ENCODE measurements at regions of chr22 and their contacts with region 1.

Region 1: DNA sequence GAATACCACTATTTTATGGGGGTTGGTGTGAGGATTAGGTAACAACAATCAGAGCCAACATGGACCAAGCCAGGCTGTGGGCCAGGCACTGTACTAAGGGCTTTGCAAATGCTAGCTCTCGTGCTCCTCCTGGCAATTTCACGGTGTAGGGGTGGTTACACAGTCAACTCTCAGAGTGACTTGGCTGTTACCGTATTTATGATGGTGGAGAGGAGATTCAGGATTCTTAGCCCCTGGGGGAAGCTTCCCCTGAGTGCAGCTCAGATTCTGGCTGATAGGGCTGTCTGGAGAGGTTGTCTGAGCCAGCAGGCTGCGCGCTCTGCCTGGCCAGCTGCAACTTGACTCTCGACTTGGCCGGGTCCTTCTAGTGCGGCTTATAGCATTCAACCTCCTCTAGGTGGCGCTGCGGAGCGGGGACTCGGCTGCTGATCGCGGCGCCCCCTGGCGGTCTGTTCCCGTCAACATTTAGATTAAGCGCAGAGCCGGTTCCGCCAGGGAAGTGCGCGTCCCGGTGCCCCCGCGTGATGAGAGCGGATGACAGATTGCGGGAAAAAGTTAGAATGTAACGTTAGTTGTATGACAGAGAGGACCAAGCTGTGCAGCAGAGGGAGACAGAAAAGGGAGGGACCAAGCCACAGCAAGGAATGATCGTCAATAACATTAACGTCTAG is 4.5 kb upstream of the NCF4 start:
- DNase-seq: peak; percentile 96
- H3K4me3 Mint-ChIP-seq: no peak overlapping the region
- H3K27ac Mint-ChIP-seq: no peak overlapping the region
- H3K4me1 Mint-ChIP-seq: peaks cover 16% of the 10 kb centered on the region
- H3K27me3 Mint-ChIP-seq: peaks cover 2% of the 10 kb centered on the region

Region 2: DNA sequence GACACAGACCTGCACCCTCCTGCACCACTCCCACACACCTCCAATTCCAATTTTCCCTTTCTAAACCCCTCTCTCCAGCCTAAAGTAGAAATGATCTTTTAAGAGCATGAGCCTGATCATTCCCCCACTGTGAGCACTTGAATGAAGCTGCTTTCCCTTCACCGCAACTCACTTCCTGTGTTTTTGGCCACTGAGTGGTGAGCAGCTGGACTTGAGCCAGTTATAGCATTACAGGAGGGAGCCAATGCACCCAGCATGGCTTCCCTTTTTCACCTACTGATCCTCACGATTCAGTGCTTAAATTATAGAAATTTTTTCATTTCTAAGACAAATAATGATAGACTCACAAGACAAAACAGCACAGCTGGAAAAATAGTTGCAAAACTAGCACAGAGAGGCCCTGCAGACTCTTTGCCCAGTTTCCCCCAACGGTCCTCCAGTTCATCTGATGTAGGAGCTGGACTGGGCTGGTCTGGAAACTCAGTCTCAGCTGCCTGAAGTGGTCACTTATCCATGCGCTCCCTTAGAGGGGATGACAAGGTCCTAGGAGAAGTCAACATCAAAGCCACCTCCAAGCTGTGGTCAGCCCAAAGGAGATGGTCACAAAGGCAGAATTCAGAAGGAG is 644.9 kb before region 1 on chr22:
- CTCF ChIA-PET with region 1: no interaction called
- intact Hi-C with region 1: no loop called
- DNase-seq: no peak
- H3K4me3 Mint-ChIP-seq: no peak overlapping the region
- H3K27ac Mint-ChIP-seq: no peak overlapping the region
- H3K4me1 Mint-ChIP-seq: peaks cover 4% of the 10 kb centered on the region
- H3K27me3 Mint-ChIP-seq: peaks cover 13% of the 10 kb centered on the region

Region 3: GRCh38 chr22:36546092-36546804 is 310.0 kb before region 1 on chr22:
- CTCF ChIA-PET with region 1: interaction called, 11 read pairs
- intact Hi-C with region 1: loop called (anchors 1 kb)
- DNase-seq: peak; percentile 59
- H3K4me3 Mint-ChIP-seq: no peak overlapping the region
- H3K27ac Mint-ChIP-seq: no peak overlapping the region
- H3K4me1 Mint-ChIP-seq: peaks cover 12% of the 10 kb centered on the region
- H3K27me3 Mint-ChIP-seq: peaks cover 15% of the 10 kb centered on the region

Region 4: GRCh38 chr22:36775964-36776669 is 80.1 kb before region 1 on chr22 and contains the start of gene IFT27:
- CTCF ChIA-PET with region 1: interaction called, 43 read pairs
- intact Hi-C with region 1: no loop called
- DNase-seq: peak; percentile 99
- H3K4me3 Mint-ChIP-seq: peak within 1 kb of the TSS; percentile 91
- H3K27ac Mint-ChIP-seq: peak within 1 kb of the TSS; percentile 90
- H3K4me1 Mint-ChIP-seq: peaks cover 27% of the 10 kb centered on the region
- H3K27me3 Mint-ChIP-seq: no peaks in the 10 kb centered on the region
- total RNA-seq, gene IFT27: 15.7 to 16.2 TPM

Region 5: DNA sequence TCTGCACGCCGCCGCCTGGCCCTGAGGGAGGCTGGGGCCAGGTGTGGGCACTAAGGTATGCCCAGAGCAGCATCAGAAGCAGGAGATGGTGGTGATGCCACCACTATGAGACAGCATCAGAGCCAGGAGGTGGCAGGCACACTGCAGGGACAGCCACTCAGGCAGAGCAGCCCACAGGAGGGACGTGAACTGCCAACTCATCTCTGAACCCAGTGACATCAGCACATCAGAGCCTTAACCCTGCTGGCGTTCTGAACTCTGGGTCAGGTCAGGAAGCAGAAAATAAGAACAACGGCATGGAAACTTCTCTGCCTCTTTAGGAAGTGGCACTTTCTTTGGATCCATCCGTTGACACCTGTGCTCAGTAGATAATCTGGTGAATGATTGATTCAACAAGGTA is 65.6 kb before region 1 on chr22:
- CTCF ChIA-PET with region 1: interaction called, 13 read pairs
- intact Hi-C with region 1: loop called (anchors 1 kb)
- DNase-seq: peak; percentile 76
- H3K4me3 Mint-ChIP-seq: no peak overlapping the region
- H3K27ac Mint-ChIP-seq: no peak overlapping the region
- H3K4me1 Mint-ChIP-seq: peaks cover 7% of the 10 kb centered on the region
- H3K27me3 Mint-ChIP-seq: no peaks in the 10 kb centered on the region

Region 6: DNA sequence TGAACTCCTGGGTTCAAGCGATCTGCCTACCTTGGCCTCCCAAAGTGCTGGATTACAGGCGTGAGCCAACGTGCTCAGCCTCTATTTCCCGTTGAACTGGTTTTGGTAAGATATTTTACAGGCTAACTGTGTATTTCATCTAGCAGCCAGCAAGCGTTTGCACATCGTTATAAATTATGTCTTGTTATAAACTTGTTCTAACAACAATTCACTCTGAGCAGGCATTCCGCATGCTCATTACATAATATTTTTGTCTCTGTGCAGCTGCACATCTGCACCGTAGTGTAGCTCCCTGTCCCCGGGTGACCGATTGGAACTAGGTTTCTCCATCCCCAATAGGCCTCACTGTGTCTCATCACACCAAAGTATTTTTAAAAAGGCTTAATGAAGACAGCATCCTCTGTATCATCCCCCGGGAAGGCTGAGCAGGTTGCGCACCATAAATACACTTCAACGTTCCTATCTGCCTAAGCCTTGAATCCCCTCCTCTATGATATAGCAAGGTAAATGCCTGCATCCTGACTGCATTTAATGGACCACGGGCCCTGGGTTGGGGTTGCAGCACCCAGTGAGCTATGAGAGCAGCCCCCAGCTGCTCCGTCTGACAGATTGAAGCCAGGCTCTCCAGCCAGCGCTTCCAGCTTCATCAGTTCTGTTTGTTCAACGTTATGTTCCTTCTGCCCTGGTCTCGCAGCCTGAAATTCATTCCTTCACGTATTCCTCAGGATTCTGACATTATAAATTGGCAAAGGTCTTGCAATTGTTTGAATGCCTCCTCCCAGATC is 115.3 kb after region 1 on chr22:
- CTCF ChIA-PET with region 1: interaction called, 21 read pairs
- intact Hi-C with region 1: no loop called
- DNase-seq: no peak
- H3K4me3 Mint-ChIP-seq: no peak overlapping the region
- H3K27ac Mint-ChIP-seq: no peak overlapping the region
- H3K4me1 Mint-ChIP-seq: no peaks in the 10 kb centered on the region
- H3K27me3 Mint-ChIP-seq: peaks cover under 1% of the 10 kb centered on the region

Measured in activated naive CD4-positive, alpha-beta T cell treated with anti-CD3 and anti-CD28 coated beads for 36 hours (primary cell).